ENCODE measurements at regions of chr10 and their contacts with region 1.

Region 1: DNA sequence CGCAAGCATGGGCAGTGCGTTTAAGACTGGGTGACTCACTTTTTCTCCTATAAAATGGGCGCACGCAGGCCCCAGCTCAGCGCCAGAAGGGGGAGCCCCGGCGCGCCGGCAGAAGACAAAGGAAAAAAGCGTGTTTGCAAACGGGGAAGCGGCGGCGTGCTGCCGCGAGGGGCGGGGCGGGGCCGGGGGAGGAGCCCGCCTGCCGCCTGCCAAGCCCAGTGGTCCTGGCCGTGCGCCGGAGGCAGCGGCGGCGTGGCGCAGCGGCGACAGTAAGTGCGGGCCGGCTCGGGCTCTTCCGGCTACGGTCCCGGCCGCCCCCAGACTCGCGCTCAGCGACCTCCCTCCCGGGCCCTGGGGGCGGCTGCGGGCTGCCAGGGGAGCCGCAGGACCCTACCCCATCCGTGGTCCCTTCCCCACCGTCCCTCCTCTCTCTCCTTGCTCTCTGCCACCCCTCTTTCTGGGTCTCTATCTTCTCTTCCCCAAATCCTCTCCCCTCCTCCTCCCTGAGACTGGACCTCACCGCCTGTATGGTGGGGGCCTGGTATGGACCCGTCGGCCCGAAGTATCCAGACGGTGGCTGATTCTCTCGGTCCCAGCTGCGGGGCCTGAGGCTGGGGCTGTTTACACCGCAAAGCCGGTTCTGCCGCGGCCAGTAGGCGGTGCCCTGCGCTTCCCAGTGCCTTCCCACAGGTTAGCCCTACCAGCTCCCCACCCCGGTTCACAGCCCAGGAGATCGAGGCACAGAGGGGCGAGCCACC is at the start of gene SLC29A3:
- DNase-seq: peak; percentile 68 to 83
- H3K4me3 ChIP-seq: peak within 1 kb of the TSS; percentile 65
- H3K27ac ChIP-seq: no peak within 1 kb of the TSS
- H3K4me1 ChIP-seq: peaks cover 19% of the 10 kb centered on the region
- H3K27me3 ChIP-seq: no peaks in the 10 kb centered on the region
- CTCF ChIP-seq: peak; percentile 84
- total RNA-seq, gene SLC29A3: 24.1 and 35.7 TPM in 2 replicates

Region 2: GRCh38 chr10:71244431-71245419 is 74.5 kb before region 1 on chr10:
- CTCF ChIA-PET with region 1: no interaction called
- POLR2A ChIA-PET with region 1: no interaction called
- intact Hi-C with region 1: no loop called
- DNase-seq: no peak
- H3K4me3 ChIP-seq: no peak overlapping the region
- H3K27ac ChIP-seq: peak overlapping the region; percentile 31
- H3K4me1 ChIP-seq: peaks cover 68% of the 10 kb centered on the region
- H3K27me3 ChIP-seq: no peaks in the 10 kb centered on the region
- CTCF ChIP-seq: no peak

Region 3: DNA sequence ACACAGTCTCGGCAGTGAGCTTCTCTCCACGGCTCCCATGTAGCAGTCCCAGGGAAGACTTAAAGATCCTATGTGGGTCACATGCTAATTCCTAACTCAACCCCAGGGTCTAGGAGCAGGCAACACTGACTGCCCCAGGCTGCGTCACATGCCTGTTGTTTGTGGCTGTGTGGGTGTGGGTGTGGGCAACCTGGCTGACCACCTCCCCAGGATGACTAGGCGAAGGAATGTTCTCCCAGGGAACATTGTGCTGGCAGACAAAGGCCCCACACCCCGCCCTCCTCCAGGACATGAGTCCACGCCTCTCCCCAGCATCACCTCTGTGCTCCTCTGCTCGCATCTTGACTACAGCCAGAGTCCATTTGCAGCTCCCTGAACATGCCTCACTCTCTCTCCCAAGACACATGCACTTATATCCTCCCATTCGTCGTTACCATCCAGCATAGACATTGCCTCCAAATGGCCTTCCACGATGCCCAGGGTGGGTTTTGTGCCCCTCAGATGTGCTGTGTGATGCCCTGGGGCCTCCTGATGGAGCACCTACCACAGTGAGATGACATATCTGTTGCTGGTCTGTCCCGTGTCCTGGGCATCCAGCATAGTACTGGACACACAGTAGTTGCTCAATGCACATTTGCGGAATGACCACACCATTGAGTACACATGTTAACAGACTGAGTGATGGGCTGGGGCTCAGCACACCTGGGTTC is 30.3 kb after region 1 on chr10:
- CTCF ChIA-PET with region 1: interaction called, 7 read pairs
- POLR2A ChIA-PET with region 1: interaction called, 3 read pairs
- intact Hi-C with region 1: loop called (anchors 1 kb)
- DNase-seq: peak; percentile 63 to 92
- H3K4me3 ChIP-seq: no peak overlapping the region
- H3K27ac ChIP-seq: no peak overlapping the region
- H3K4me1 ChIP-seq: peaks cover 45% of the 10 kb centered on the region
- H3K27me3 ChIP-seq: no peaks in the 10 kb centered on the region
- CTCF ChIP-seq: no peak

Region 4: GRCh38 chr10:71371750-71372166 is 52.5 kb after region 1 on chr10:
- CTCF ChIA-PET with region 1: interaction called, 17 read pairs
- POLR2A ChIA-PET with region 1: interaction called, 7 read pairs
- intact Hi-C with region 1: no loop called
- DNase-seq: no peak
- H3K4me3 ChIP-seq: no peak overlapping the region
- H3K27ac ChIP-seq: no peak overlapping the region
- H3K4me1 ChIP-seq: peaks cover 30% of the 10 kb centered on the region
- H3K27me3 ChIP-seq: no peaks in the 10 kb centered on the region
- CTCF ChIP-seq: no peak

Region 5: DNA sequence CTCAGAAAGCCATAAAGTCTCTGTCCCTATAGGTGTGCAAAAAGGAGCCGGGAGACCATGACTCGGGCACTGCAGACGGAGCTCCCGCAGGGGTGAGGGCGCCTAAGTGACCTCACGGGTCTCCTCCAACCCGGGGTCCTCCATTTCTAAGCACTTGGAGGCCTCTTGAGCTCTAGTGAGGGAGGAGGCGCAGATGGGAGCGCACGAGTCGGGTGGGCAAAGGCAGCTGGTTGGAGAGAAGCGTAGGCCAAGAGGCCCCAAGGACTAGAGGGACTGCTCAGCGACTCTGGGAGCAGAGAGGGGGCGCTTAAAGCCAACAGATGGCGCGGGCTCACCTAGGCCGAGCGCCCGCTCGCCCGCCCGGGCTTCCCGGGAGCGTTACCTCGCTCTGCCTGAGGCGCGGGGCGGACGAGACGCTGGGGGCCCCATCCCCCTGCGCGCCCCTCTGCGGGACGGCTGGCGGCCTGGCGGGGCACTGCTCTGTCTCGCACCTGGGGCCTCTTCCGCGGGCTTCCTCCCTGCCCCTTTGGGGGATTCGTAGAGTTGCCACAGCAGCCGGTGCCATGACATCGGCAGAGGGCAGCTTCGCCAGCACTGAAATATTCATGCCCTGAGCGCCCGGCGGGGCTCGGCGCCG is 77.0 kb after region 1 on chr10:
- CTCF ChIA-PET with region 1: interaction called, 6 read pairs
- POLR2A ChIA-PET with region 1: no interaction called
- intact Hi-C with region 1: loop called (anchors 1 kb)
- DNase-seq: peak; percentile 49 to 70
- H3K4me3 ChIP-seq: peak overlapping the region; percentile 60
- H3K27ac ChIP-seq: no peak overlapping the region
- H3K4me1 ChIP-seq: peaks cover 41% of the 10 kb centered on the region
- H3K27me3 ChIP-seq: peaks cover 8% of the 10 kb centered on the region; the same call in 1 of the 2 replicates
- CTCF ChIP-seq: peak; percentile 57

Region 6: GRCh38 chr10:71569775-71570588 is 250.8 kb after region 1 on chr10:
- CTCF ChIA-PET with region 1: interaction called, 5 read pairs
- POLR2A ChIA-PET with region 1: no interaction called
- intact Hi-C with region 1: loop called (anchors 1 kb)
- DNase-seq: peak in 1 of 2 experiments; percentile 75
- H3K4me3 ChIP-seq: no peak overlapping the region
- H3K27ac ChIP-seq: no peak overlapping the region
- H3K4me1 ChIP-seq: no peaks in the 10 kb centered on the region
- H3K27me3 ChIP-seq: no peaks in the 10 kb centered on the region
- CTCF ChIP-seq: peak; percentile 97

Region 7: DNA sequence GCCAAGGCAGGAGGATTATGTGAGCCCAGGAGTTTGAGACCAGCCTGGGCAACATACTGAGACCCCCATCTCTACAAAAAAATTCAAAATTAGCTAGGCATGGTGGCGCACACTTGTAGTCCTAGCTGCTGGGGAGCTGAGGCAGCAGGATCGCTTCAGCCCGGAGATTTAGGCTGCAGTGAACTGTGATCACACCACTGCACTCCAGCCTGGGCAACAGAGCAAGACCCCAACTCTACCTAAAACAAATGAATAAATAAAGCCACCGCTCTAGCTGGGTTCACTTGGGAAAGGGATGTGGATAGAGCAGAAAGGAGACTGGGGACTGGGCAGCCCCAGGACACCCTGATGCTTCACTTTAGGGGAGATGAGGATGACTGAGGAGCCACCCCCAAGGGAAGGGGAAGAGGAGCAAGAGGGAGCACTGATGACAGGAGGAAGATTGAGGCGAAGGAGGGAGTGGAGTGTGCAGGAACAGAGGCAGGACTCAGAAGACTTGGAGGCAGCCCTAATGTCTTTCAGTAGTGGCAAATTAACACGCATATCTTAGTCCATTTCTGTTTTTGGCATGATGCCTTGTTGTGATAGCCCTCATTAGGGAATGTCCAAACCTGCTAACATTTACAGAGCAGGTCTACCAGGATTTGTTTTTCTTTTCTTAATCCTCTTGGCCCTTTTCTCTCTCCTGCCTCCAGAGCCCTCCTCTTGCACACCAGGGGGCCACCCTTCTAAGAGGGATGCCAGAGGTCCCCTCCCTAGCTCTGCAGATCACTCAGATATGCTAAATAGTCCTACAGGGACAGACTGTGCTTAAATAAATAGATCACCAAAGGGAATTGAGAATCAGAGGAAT is 312.0 kb after region 1 on chr10:
- CTCF ChIA-PET with region 1: no interaction called
- POLR2A ChIA-PET with region 1: interaction called, 10 read pairs
- intact Hi-C with region 1: no loop called
- DNase-seq: no peak
- H3K4me3 ChIP-seq: no peak overlapping the region
- H3K27ac ChIP-seq: no peak overlapping the region
- H3K4me1 ChIP-seq: no peaks in the 10 kb centered on the region
- H3K27me3 ChIP-seq: no peaks in the 10 kb centered on the region
- CTCF ChIP-seq: no peak

Region 8: DNA sequence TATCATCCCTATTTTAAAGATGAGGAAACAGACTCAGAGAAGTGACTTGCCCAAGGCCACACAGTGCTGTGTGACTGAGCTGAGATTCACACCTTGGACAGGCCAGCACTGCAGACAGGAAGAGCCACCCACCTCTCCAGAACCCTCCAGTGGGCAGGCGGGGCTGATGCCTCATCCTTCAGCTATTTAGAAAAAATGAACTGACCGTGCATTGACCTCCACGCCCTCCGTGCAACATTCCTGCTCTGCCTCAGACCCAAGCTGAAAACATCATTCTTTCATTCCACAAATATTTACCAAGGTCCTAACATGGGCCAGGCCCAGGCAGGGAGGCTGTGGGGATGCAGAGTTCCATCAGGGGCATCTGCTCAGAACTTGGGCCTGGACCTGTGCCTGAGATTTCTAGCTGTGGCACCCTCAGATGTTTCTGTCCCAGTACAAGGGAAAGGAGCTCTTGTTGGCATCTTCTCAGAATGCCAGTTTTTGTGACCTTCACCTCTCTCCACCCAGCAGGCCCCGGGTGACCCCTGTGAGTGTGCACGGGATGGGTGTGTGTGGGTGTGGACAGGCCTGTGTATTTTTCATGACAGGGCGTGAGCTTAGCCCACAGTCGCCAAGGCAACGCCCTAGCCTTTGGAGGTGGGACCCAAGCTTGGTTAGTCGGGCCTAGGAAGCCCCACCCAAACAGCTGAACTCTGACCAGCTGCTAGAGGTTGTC is 447.6 kb after region 1 on chr10:
- CTCF ChIA-PET with region 1: no interaction called
- POLR2A ChIA-PET with region 1: no interaction called
- intact Hi-C with region 1: loop called (anchors 5 kb)
- DNase-seq: peak; percentile 95 to 99
- H3K4me3 ChIP-seq: peak overlapping the region; percentile 28; the same call in 1 of the 2 replicates
- H3K27ac ChIP-seq: peak overlapping the region; percentile 88
- H3K4me1 ChIP-seq: peaks cover 91% of the 10 kb centered on the region
- H3K27me3 ChIP-seq: no peaks in the 10 kb centered on the region
- CTCF ChIP-seq: no peak

Region 9: GRCh38 chr10:72273410-72274212 is 954.4 kb after region 1 on chr10 and contains the start of gene DDIT4:
- CTCF ChIA-PET with region 1: no interaction called
- POLR2A ChIA-PET with region 1: no interaction called
- intact Hi-C with region 1: no loop called
- DNase-seq: peak; percentile 99 to 100
- H3K4me3 ChIP-seq: peak within 1 kb of the TSS; percentile 88
- H3K27ac ChIP-seq: peak within 1 kb of the TSS; percentile 99
- H3K4me1 ChIP-seq: peaks cover 46% of the 10 kb centered on the region
- H3K27me3 ChIP-seq: no peaks in the 10 kb centered on the region
- CTCF ChIP-seq: no peak
- total RNA-seq, gene DDIT4: 178 and 212 TPM in 2 replicates

Measured in PC-9 (cell line).